ENCODE measurements at regions of chr6 and their contacts with region 1.

Region 1: DNA sequence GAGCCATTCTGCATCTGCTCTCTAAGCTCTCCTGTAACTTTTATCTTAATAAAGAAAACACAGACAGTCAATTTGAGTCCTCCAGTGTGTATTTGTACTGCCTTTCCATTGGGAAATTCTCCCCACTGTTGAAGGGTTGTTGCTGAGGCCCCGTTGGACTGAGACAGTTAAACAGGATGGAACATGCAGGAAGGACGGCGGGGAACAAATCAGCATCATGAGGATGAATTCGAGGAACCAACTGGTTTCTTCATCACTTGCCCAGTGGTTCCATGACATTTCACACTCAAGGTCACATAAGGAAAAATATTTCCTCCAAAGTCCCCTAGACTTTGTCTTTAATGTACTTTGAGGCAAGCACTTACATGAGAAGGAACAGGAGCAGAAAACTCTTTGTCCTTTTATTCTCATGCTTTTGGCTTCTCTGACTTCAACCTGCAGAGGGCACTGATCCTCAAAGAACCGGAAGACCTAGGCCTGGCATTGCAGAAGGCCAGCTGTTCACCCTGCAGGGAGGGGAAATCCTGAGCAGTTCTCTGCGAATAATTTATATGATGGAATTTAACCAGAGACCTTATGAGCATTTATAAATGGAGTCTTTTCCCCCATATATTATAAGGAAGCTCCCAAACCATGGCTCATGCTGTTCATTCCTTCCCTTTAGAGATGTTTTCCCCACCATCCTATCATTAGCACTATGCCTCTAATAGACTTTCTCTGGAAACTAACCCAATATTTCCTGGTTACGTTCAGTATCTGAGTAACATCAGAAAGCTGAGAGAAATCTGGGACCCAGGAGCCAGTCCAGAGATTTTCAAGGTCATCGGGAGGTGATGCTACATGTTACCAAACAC is 55.2 kb upstream of the ADGRF1 start:
- DNase-seq: peak; percentile 58 to 81 (median 67)
- ATAC-seq: peak; percentile 97
- H3K4me3 ChIP-seq: no peak overlapping the region
- H3K27ac ChIP-seq: no peak overlapping the region
- H3K4me1 ChIP-seq: no peaks in the 10 kb centered on the region
- H3K27me3 ChIP-seq: 0 out of 5 replicates have a peak, but pooled peaks cover 0 to 4% of the 10 kb centered on the region in 2 experiments
- CTCF ChIP-seq: peak; percentile 81 to 93 (median 83)
- EP300 ChIP-seq: no peak
- POLR2A ChIP-seq: no peak
- RAD21 ChIP-seq: peak; percentile 97

Region 2: GRCh38 chr6:47168183-47168582 is 70.9 kb after region 1 on chr6:
- CTCF ChIA-PET with region 1: no interaction called
- POLR2A ChIA-PET with region 1: no interaction called
- in situ Hi-C with region 1: no loop called
- intact Hi-C with region 1: loop called (anchors 5 kb)
- DNase-seq: peak in 1 of 4 experiments; percentile 30
- ATAC-seq: peak; percentile 64
- H3K4me3 ChIP-seq: no peak overlapping the region
- H3K27ac ChIP-seq: no peak overlapping the region
- H3K4me1 ChIP-seq: no peaks in the 10 kb centered on the region
- H3K27me3 ChIP-seq: no peaks in the 10 kb centered on the region
- CTCF ChIP-seq: no peak
- EP300 ChIP-seq: no peak
- POLR2A ChIP-seq: no peak
- RAD21 ChIP-seq: no peak

Region 3: GRCh38 chr6:47242483-47243386 is 145.4 kb after region 1 on chr6:
- CTCF ChIA-PET with region 1: no interaction called
- POLR2A ChIA-PET with region 1: no interaction called
- in situ Hi-C with region 1: no loop called
- intact Hi-C with region 1: loop called (anchors 1 kb)
- DNase-seq: peak; percentile 85 to 98 (median 91)
- ATAC-seq: peak; percentile 98
- H3K4me3 ChIP-seq: no peak overlapping the region; the same call in 1 of the 2 replicates
- H3K27ac ChIP-seq: peak overlapping the region; percentile 79
- H3K4me1 ChIP-seq: peaks cover 7 to 45% of the 10 kb centered on the region in 2 experiments; a peak in 4 of 5 replicates
- H3K27me3 ChIP-seq: no peaks in the 10 kb centered on the region
- CTCF ChIP-seq: no peak; a peak in 1 of 6 replicates
- EP300 ChIP-seq: peak; percentile 93
- POLR2A ChIP-seq: peak; percentile 63
- RAD21 ChIP-seq: no peak; a peak in 2 of 4 replicates

Region 4: DNA sequence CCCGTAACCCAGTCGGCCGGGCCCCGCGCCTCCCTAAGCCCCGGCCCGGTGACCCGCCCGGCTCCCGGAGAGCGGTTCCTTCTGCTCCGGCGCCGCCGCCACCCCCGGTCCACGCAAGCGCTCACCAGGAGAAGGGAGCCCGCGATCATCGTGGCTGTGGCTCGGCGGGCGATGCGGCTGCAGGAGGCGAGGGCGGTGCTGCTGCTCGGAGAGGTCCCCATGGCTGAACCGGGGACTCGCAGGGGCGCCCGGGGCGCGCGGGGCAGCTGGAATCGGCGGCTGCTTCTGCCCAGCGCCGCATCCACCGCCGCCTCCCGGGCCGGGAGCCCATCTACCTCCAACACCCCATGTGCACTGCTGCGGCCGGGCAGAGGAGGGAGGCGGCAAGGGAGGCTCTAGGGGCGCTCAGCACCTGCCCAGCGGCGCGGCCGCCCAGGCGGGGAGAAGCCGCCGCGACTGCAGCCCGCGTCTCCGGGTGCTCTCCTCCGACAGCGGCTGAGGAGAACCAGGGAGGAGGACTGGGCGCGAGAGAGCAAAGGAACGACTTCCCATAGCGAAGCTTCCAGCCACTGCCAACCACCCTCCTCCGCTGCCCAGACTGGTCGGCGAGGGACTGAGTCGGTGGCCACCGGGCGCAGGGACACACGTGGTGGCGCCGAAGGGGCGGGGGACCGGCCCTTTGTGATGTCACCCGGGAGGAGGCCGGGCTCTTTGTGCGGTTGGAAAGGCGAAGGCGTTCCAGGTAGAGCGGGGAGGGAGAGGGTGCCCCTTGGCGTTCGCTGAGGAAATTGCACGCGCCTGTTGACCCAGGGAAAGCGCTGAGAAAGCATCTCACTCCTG is 212.2 kb after region 1 on chr6 and contains the start of gene TNFRSF21:
- CTCF ChIA-PET with region 1: interaction called, 57 read pairs
- POLR2A ChIA-PET with region 1: interaction called, 4 read pairs
- in situ Hi-C with region 1: loop called (anchors 5 kb)
- intact Hi-C with region 1: loop called (anchors 1 kb)
- DNase-seq: peak; percentile 95 to 97 (median 96)
- ATAC-seq: peak; percentile 99
- H3K4me3 ChIP-seq: peak within 1 kb of the TSS; percentile 61
- H3K27ac ChIP-seq: no peak within 1 kb of the TSS
- H3K4me1 ChIP-seq: peaks cover 0 to 15% of the 10 kb centered on the region in 2 experiments; a peak in 3 of 5 replicates
- H3K27me3 ChIP-seq: peaks cover 11 to 15% of the 10 kb centered on the region in 2 experiments
- CTCF ChIP-seq: peak; percentile 96 to 99 (median 99)
- EP300 ChIP-seq: peak; percentile 27
- POLR2A ChIP-seq: peak; percentile 63
- RAD21 ChIP-seq: peak; percentile 99
- polyA plus RNA-seq, gene TNFRSF21: 0.63 to 0.67 TPM

Region 5: DNA sequence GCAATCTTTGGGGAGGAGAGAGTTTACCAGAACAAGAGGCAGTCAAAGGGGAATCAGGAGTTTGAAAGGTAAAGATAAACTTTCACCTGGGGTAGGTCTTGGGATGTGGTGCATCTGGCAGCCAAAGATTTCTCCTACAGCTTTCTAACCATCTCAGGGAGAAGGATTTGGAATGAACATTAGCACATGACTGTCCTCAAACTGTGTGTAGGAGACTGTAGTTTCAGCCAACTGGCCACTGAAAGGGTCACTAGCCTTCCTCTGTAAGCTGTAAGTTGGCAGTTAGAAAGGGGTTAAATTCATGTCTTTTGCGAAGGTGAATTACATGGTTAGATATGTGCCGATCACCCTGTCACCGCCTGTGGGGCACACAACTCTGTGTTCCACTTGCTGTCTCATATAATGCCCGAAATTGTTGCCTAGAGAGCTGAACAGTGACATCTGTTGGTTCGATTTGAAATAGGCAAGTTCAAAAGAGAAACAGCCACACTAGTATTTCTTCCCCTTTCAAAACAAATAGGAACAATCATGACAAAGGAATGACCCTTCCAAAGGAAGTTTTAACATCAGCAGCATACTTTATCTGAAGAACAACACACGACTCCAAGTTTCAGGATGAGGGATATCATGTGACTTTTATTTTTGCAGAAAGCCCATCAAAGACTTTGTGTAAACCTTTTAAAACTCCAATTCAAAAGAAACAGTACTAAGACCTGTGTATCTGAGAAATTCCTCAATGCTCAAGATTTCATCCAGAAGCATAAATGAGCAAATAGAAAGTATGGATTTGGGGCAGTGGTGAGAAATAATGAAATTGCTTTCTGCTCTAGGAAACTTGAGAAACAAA is 683.4 kb after region 1 on chr6:
- CTCF ChIA-PET with region 1: interaction called, 3 read pairs
- POLR2A ChIA-PET with region 1: no interaction called
- in situ Hi-C with region 1: no loop called
- intact Hi-C with region 1: loop called (anchors 5 kb)
- DNase-seq: peak in 3 of 4 experiments; percentile 16 to 56 (median 42)
- ATAC-seq: peak; percentile 91
- H3K4me3 ChIP-seq: no peak overlapping the region
- H3K27ac ChIP-seq: no peak overlapping the region
- H3K4me1 ChIP-seq: no peaks in the 10 kb centered on the region
- H3K27me3 ChIP-seq: no peaks in the 10 kb centered on the region
- CTCF ChIP-seq: peak; percentile 65 to 79 (median 73)
- EP300 ChIP-seq: no peak
- POLR2A ChIP-seq: no peak
- RAD21 ChIP-seq: peak; percentile 79 to 87